ENCODE measurements at regions of chr12 and their contacts with region 1.

Region 1: GRCh38 chr12:69900720-69901131 is 75.7 kb downstream of the MYRFL start:
- DNase-seq: peak; percentile 92
- H3K4me3 Mint-ChIP-seq: no peak overlapping the region
- H3K27ac Mint-ChIP-seq: no peak overlapping the region
- H3K4me1 Mint-ChIP-seq: peaks cover 10% of the 10 kb centered on the region
- H3K27me3 Mint-ChIP-seq: no peaks in the 10 kb centered on the region
- CTCF ChIP-seq: peak; percentile 89

Region 2: DNA sequence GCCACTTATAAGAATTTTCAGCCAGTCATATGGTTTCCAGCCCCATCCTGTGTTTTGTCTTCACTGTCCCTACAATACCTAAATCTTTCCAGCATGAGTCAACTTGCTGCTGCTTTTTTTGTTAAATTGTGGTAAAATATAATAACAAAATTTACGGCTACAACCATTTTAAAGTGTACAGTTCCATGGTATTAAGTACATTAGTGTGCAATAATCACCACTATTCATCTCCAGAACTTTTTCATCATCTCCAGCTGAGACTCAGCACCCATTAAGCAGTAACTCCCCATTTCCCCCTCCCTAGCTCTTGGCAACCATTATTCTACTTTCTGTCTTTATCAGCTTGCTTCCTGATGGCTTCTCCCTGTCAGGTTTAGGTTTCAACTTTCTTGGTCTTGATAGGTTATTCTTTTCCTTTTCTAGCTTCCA is 391.4 kb before region 1 on chr12:
- CTCF ChIA-PET with region 1: no interaction called
- POLR2A ChIA-PET with region 1: no interaction called
- intact Hi-C with region 1: no loop called
- DNase-seq: no peak
- H3K4me3 Mint-ChIP-seq: no peak overlapping the region
- H3K27ac Mint-ChIP-seq: peak overlapping the region; percentile 54
- H3K4me1 Mint-ChIP-seq: peaks cover 55% of the 10 kb centered on the region
- H3K27me3 Mint-ChIP-seq: no peaks in the 10 kb centered on the region
- CTCF ChIP-seq: no peak

Region 3: DNA sequence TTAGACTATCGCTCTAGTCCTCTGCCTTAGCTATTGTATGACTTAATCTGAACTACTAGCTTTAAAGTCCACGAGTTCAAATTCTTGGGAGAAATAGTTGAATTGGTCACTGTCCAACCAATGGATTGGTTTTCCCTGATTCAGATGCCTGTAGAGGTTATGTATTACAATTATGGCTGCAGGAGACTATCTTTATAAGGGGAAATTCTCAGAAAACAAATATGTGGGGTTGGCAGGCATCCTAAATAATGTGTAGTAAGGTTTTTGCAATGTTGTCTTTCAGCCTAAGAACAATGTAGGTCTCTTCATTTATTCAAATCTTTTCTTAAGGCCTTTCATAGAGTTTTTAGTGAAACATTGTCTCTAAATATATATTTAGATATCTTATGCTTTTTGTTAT is 48.8 kb before region 1 on chr12:
- CTCF ChIA-PET with region 1: no interaction called
- POLR2A ChIA-PET with region 1: no interaction called
- intact Hi-C with region 1: no loop called
- DNase-seq: no peak
- H3K4me3 Mint-ChIP-seq: no peak overlapping the region
- H3K27ac Mint-ChIP-seq: no peak overlapping the region
- H3K4me1 Mint-ChIP-seq: no peaks in the 10 kb centered on the region
- H3K27me3 Mint-ChIP-seq: no peaks in the 10 kb centered on the region
- CTCF ChIP-seq: no peak

Region 4: GRCh38 chr12:69885658-69886057 is 15.1 kb before region 1 on chr12:
- CTCF ChIA-PET with region 1: interaction called, 58 read pairs
- POLR2A ChIA-PET with region 1: interaction called, 5 read pairs
- intact Hi-C with region 1: no loop called
- DNase-seq: no peak
- H3K4me3 Mint-ChIP-seq: no peak overlapping the region
- H3K27ac Mint-ChIP-seq: no peak overlapping the region
- H3K4me1 Mint-ChIP-seq: no peaks in the 10 kb centered on the region
- H3K27me3 Mint-ChIP-seq: no peaks in the 10 kb centered on the region
- CTCF ChIP-seq: no peak

Region 5: GRCh38 chr12:69966409-69967207 is 65.9 kb after region 1 on chr12:
- CTCF ChIA-PET with region 1: interaction called, 9 read pairs
- POLR2A ChIA-PET with region 1: interaction called, 9 read pairs
- intact Hi-C with region 1: loop called (anchors 2 kb)
- DNase-seq: peak; percentile 88
- H3K4me3 Mint-ChIP-seq: peak overlapping the region; percentile 6
- H3K27ac Mint-ChIP-seq: peak overlapping the region; percentile 86
- H3K4me1 Mint-ChIP-seq: peaks cover 23% of the 10 kb centered on the region
- H3K27me3 Mint-ChIP-seq: no peaks in the 10 kb centered on the region
- CTCF ChIP-seq: no peak

Region 6: GRCh38 chr12:69985656-69986055 is 84.9 kb after region 1 on chr12:
- CTCF ChIA-PET with region 1: interaction called, 4 read pairs
- POLR2A ChIA-PET with region 1: interaction called, 12 read pairs
- intact Hi-C with region 1: no loop called
- DNase-seq: peak; percentile 24
- H3K4me3 Mint-ChIP-seq: no peak overlapping the region
- H3K27ac Mint-ChIP-seq: no peak overlapping the region
- H3K4me1 Mint-ChIP-seq: no peaks in the 10 kb centered on the region
- H3K27me3 Mint-ChIP-seq: no peaks in the 10 kb centered on the region
- CTCF ChIP-seq: peak; percentile 18

Region 7: GRCh38 chr12:70242695-70243509 is 342.2 kb after region 1 on chr12 and contains the start of gene CNOT2:
- CTCF ChIA-PET with region 1: interaction called, 3 read pairs
- POLR2A ChIA-PET with region 1: interaction called, 9 read pairs
- intact Hi-C with region 1: loop called (anchors 1 kb)
- DNase-seq: peak; percentile 92
- H3K4me3 Mint-ChIP-seq: peak within 1 kb of the TSS; percentile 95
- H3K27ac Mint-ChIP-seq: peak within 1 kb of the TSS; percentile 93
- H3K4me1 Mint-ChIP-seq: peaks cover 39% of the 10 kb centered on the region
- H3K27me3 Mint-ChIP-seq: no peaks in the 10 kb centered on the region
- CTCF ChIP-seq: no peak
- total RNA-seq, gene CNOT2: 88.3 and 91.0 TPM in 2 replicates

Region 8: DNA sequence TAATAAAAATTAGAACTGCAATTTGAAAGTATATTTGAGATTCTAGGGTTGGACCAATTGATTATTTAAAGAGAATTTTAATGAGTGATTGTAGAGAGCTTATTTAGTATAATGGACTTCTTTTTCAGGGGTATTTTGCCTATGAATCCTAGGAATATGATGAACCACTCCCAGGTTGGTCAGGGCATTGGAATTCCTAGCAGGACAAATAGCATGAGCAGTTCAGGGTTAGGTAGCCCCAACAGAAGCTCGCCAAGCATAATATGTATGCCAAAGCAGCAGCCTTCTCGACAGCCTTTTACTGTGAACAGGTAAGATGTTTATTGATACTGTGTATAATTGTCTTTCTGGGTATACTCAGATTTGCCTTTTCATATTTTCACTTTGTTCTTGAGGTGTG is 429.4 kb after region 1 on chr12:
- CTCF ChIA-PET with region 1: interaction called, 12 read pairs
- POLR2A ChIA-PET with region 1: interaction called, 3 read pairs
- intact Hi-C with region 1: no loop called
- DNase-seq: no peak
- H3K4me3 Mint-ChIP-seq: no peak overlapping the region
- H3K27ac Mint-ChIP-seq: no peak overlapping the region
- H3K4me1 Mint-ChIP-seq: peaks cover 8% of the 10 kb centered on the region
- H3K27me3 Mint-ChIP-seq: no peaks in the 10 kb centered on the region
- CTCF ChIP-seq: no peak

Region 9: GRCh38 chr12:70354787-70355186 is 454.1 kb after region 1 on chr12:
- CTCF ChIA-PET with region 1: interaction called, 12 read pairs
- POLR2A ChIA-PET with region 1: interaction called, 3 read pairs
- intact Hi-C with region 1: loop called (anchors 5 kb)
- DNase-seq: no peak
- H3K4me3 Mint-ChIP-seq: no peak overlapping the region
- H3K27ac Mint-ChIP-seq: no peak overlapping the region
- H3K4me1 Mint-ChIP-seq: no peaks in the 10 kb centered on the region
- H3K27me3 Mint-ChIP-seq: no peaks in the 10 kb centered on the region
- CTCF ChIP-seq: no peak